ENCODE measurements at regions of chr2 and their contacts with region 1.

Region 1: DNA sequence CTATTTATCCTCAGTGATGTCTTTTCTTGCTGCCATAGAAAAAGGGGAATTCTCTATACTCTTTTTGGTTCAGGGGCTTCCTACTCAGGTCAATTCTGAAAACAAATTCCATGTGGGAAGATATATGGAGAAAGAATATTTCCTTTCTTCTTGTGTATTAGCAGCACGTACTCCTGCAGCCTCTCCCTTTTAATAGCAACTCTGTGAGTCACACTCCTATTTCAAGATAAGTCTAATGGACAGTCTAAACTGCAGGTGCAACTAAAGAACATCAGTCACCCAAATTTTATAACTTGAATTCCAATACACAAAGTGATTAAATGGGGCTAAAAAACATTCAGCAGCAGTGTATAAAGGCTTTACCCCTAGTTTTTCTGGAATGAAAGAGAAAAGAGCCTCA is 942.2 kb downstream of the CNTNAP5 start:
- DNase-seq: no peak
- ATAC-seq: no peak
- H3K4me3 ChIP-seq: no peak overlapping the region
- H3K27ac ChIP-seq: no peak overlapping the region
- H3K4me1 ChIP-seq: no peaks in the 10 kb centered on the region
- H3K27me3 ChIP-seq: no peaks in the 10 kb centered on the region
- CTCF ChIP-seq: no peak
- POLR2A ChIP-seq: no peak
- RAD21 ChIP-seq: no peak

Region 2: DNA sequence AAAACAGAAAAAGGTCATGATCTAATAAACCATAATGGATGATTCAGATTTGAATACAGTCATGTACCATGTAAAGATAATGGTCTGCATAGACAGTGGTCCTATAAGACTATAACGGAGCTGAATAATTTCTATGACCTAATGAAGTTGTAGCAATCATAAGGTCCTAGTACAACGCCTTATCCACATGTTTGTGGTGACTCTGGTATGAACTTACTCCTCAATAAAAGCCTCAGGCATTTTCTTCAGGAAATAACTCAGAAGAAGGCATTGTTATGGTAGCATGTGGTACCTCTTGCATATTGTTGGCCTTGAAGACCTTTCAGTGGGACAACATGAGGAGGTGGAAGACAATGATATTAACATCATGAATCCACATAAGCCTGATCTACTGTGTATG is 58.9 kb before region 1 on chr2:
- CTCF ChIA-PET with region 1: no interaction called
- POLR2A ChIA-PET with region 1: no interaction called
- dilution Hi-C with region 1: no loop called
- in situ Hi-C with region 1: no loop called
- intact Hi-C with region 1: loop called (anchors 10 kb)
- DNase-seq: no peak
- ATAC-seq: no peak
- H3K4me3 ChIP-seq: no peak overlapping the region
- H3K27ac ChIP-seq: no peak overlapping the region
- H3K4me1 ChIP-seq: no peaks in the 10 kb centered on the region
- H3K27me3 ChIP-seq: no peaks in the 10 kb centered on the region
- CTCF ChIP-seq: no peak
- POLR2A ChIP-seq: no peak
- RAD21 ChIP-seq: no peak